Activated B cell treated with CpG ODN at 0.5 μM for 24 hours (primary cell): ENCODE measurements at regions of chr1 and their contacts with region 1.

Region 1: GRCh38 chr1:230303822-230304221 is 122.3 kb downstream of the PGBD5 start:
- DNase-seq: no peak
- ATAC-seq: no peak
- H3K4me3 Mint-ChIP-seq: no peak overlapping the region
- H3K27ac Mint-ChIP-seq: no peak overlapping the region
- H3K4me1 Mint-ChIP-seq: peaks cover 65% of the 10 kb centered on the region
- H3K27me3 Mint-ChIP-seq: no peaks in the 10 kb centered on the region
- CTCF ChIP-seq: no peak

Region 2: DNA sequence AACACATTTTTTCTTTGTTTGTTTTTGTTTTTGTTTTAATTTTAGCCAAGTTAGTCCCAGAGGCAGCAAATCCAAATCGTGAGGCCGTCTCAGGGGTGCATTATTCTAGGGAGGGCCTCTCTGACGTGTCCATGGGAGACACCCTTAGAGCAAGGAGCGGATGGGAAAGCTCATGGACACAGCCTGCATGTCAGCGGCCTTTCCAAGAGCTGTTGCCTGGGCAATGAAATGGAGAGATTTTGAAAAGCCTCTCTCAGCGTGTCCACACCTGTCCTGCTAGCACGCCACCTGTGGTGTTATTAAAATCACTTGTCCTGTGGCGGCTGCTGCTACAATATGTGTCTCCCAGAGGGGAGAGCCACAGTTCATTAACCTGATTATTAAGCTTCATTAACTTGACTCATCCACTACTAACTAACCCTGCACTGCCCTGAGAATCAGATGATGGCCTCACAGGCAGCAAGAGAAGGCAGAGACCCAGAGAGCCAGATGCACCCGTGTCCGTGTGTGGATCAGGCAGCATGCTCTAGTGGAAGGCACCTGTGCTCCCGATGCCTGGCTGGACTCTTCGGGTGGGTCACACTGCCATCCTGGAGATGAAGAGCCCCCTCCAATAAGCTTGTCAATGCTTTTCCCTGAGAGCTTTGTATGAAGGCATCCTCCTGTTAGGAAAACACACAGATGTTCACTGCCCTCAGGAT is 11.0 kb before region 1 on chr1:
- CTCF ChIA-PET with region 1: interaction called, 3 read pairs
- POLR2A ChIA-PET with region 1: interaction called, 7 read pairs
- intact Hi-C with region 1: loop called (anchors 1 kb)
- DNase-seq: no peak
- ATAC-seq: no peak
- H3K4me3 Mint-ChIP-seq: no peak overlapping the region
- H3K27ac Mint-ChIP-seq: peak overlapping the region; percentile 59
- H3K4me1 Mint-ChIP-seq: peaks cover 58% of the 10 kb centered on the region
- H3K27me3 Mint-ChIP-seq: no peaks in the 10 kb centered on the region
- CTCF ChIP-seq: no peak